Naive thymus-derived CD4-positive, alpha-beta T cell (primary cell): ENCODE measurements at regions of chr4 and their contacts with region 1.

Region 1: GRCh38 chr4:143184217-143185116 is at the start of gene USP38:
- DNase-seq: peak; percentile 74 to 90 (median 85)
- ATAC-seq: peak; percentile 91
- H3K4me3 ChIP-seq: peak within 1 kb of the TSS; percentile 78
- H3K4me3 Mint-ChIP-seq: peak within 1 kb of the TSS; percentile 78 to 99 (median 94)
- H3K27ac ChIP-seq: peak within 1 kb of the TSS; percentile 96
- H3K27ac Mint-ChIP-seq: peak within 1 kb of the TSS; percentile 93 to 99 (median 97)
- H3K4me1 ChIP-seq: peaks cover 27% of the 10 kb centered on the region in 2 donors
- H3K4me1 Mint-ChIP-seq: peaks cover 41 to 82% (median 70%) of the 10 kb centered on the region in 7 donors
- H3K27me3 ChIP-seq: no peaks in the 10 kb centered on the region
- H3K27me3 Mint-ChIP-seq: no peaks in the 10 kb centered on the region
- total RNA-seq, gene USP38: 22.4 to 28.8 (median 24.3) TPM

Region 2: GRCh38 chr4:141220655-141221605 is 1963.5 kb before region 1 on chr4 and contains the start of gene ZNF330:
- CTCF ChIA-PET with region 1: no interaction called
- POLR2A ChIA-PET with region 1: no interaction called
- intact Hi-C with region 1: loop called (anchors 1 to 2 kb)
- DNase-seq: peak; percentile 80 to 97 (median 90)
- ATAC-seq: peak; percentile 97
- H3K4me3 ChIP-seq: peak within 1 kb of the TSS; percentile 94
- H3K4me3 Mint-ChIP-seq: peak within 1 kb of the TSS; percentile 91 to 99 (median 94)
- H3K27ac ChIP-seq: peak within 1 kb of the TSS; percentile 93
- H3K27ac Mint-ChIP-seq: peak within 1 kb of the TSS; percentile 91 to 97 (median 96)
- H3K4me1 ChIP-seq: peaks cover 9 to 13% of the 10 kb centered on the region in 2 donors
- H3K4me1 Mint-ChIP-seq: peaks cover 24 to 58% (median 52%) of the 10 kb centered on the region in 7 donors
- H3K27me3 ChIP-seq: no peaks in the 10 kb centered on the region
- H3K27me3 Mint-ChIP-seq: peaks cover 0 to 18% (median 6%) of the 10 kb centered on the region in 5 donors
- total RNA-seq, gene ZNF330: 31.7 to 44.7 (median 41.0) TPM

Region 3: GRCh38 chr4:142126890-142127497 is 1057.5 kb before region 1 on chr4:
- CTCF ChIA-PET with region 1: no interaction called
- POLR2A ChIA-PET with region 1: no interaction called
- intact Hi-C with region 1: loop called (anchors 1 to 5 kb)
- DNase-seq: peak in 8 of 9 donors; percentile 30 to 73 (median 66)
- ATAC-seq: peak; percentile 83
- H3K4me3 ChIP-seq: no peak overlapping the region
- H3K4me3 Mint-ChIP-seq: no peak overlapping the region
- H3K27ac ChIP-seq: no peak overlapping the region
- H3K27ac Mint-ChIP-seq: peak overlapping the region in 1 of 9 donors; percentile 22
- H3K4me1 ChIP-seq: peaks cover 0 to 32% of the 10 kb centered on the region in 2 donors
- H3K4me1 Mint-ChIP-seq: peaks cover 10 to 38% (median 37%) of the 10 kb centered on the region in 7 donors
- H3K27me3 ChIP-seq: no peaks in the 10 kb centered on the region
- H3K27me3 Mint-ChIP-seq: no peaks in the 10 kb centered on the region

Region 4: DNA sequence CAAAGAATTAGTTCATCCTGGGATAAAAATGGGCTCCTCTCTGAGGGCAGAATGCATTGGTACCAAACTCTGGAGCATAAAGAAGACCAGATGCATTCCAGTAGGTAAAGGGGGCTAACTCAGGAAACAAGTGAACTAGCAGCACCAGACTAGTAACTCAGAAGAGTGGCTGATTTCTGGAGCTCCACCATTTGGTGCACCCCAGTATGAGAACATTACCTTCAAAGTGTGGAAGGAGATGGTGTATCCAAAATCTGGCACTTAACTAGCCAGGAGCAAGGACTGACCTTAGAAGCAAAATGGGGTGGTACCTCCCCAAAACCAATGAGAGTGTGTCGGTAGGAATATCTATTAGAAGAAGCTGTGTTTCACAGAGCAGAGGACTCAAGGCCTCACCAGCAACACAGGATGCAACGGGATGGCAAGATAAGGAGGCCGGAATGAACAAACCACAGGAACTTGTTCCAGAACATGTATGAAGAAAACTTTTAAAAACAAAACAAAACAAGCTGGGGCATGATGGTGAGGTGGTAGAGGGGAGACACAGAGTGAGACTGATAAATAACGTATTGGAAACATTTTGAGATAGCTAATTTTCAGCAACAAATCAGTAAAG is 480.7 kb before region 1 on chr4:
- CTCF ChIA-PET with region 1: no interaction called
- POLR2A ChIA-PET with region 1: no interaction called
- intact Hi-C with region 1: loop called in 1 of 2 experiments (anchors 10 kb)
- DNase-seq: peak in 7 of 9 donors; percentile 51 to 71 (median 58)
- ATAC-seq: peak; percentile 76
- H3K4me3 ChIP-seq: peak overlapping the region; percentile 14
- H3K4me3 Mint-ChIP-seq: no peak overlapping the region
- H3K27ac ChIP-seq: peak overlapping the region; percentile 54
- H3K27ac Mint-ChIP-seq: no peak overlapping the region
- H3K4me1 ChIP-seq: peaks cover 51 to 94% of the 10 kb centered on the region in 2 donors
- H3K4me1 Mint-ChIP-seq: peaks cover 20 to 35% (median 32%) of the 10 kb centered on the region in 7 donors
- H3K27me3 ChIP-seq: no peaks in the 10 kb centered on the region
- H3K27me3 Mint-ChIP-seq: no peaks in the 10 kb centered on the region

Region 5: DNA sequence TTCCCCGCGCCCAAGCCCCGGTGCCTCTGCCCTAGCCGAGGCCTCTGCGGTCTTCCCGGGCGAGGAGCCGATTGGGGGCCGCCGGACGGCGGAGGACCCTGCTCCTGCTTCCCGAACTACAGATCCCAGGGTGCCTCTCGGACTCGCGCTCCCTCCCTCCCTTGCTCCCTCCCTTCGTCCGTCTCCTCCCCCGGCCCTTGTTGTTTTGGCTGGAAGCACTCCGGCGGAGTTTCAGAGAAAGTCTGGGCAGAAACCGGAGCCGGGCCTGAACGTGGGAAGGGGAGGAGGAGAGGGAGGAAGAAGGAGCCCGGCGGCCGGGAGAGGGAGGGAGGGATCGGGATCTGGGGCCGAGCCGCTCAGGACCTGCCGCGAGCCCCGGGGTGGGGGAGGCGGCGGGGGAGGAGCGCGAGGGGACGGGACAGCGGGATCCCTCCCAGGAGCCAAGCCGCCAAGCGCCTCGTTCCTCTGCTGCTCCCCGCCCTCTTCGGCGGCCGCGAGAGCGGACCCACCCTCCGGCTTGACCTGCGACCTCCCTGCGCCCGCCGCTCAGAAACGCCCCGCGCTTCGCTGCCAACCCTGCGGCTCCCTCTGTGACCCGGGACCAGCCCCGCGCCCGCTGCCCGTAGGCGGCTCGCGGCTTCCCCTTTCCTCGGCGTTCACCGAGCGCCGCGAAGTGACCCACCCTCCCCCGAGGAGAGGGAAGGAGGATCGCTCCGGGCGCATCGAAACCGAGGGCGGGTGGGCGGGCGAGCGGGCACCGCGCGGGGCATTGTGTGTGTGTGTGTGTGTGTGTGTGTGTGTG is 151.7 kb after region 1 on chr4:
- CTCF ChIA-PET with region 1: no interaction called
- POLR2A ChIA-PET with region 1: no interaction called
- intact Hi-C with region 1: loop called in 1 of 2 experiments (anchors 5 kb)
- DNase-seq: peak in 2 of 9 donors; percentile 25 to 56
- ATAC-seq: peak; percentile 68
- H3K4me3 ChIP-seq: peak overlapping the region; percentile 13
- H3K4me3 Mint-ChIP-seq: peak overlapping the region; percentile 45 to 91 (median 74)
- H3K27ac ChIP-seq: no peak overlapping the region
- H3K27ac Mint-ChIP-seq: no peak overlapping the region
- H3K4me1 ChIP-seq: no peaks in the 10 kb centered on the region
- H3K4me1 Mint-ChIP-seq: peaks cover 4 to 12% (median 5%) of the 10 kb centered on the region in 7 donors
- H3K27me3 ChIP-seq: peaks cover 3 to 19% of the 10 kb centered on the region in 2 donors
- H3K27me3 Mint-ChIP-seq: peaks cover 39 to 65% (median 49%) of the 10 kb centered on the region in 5 donors

Region 6: GRCh38 chr4:143406523-143406922 is 222.1 kb after region 1 on chr4:
- CTCF ChIA-PET with region 1: no interaction called
- POLR2A ChIA-PET with region 1: no interaction called
- intact Hi-C with region 1: loop called in 1 of 2 experiments (anchors 10 kb)
- DNase-seq: no peak
- ATAC-seq: no peak
- H3K4me3 ChIP-seq: no peak overlapping the region
- H3K4me3 Mint-ChIP-seq: no peak overlapping the region
- H3K27ac ChIP-seq: no peak overlapping the region
- H3K27ac Mint-ChIP-seq: no peak overlapping the region
- H3K4me1 ChIP-seq: peaks cover 0 to 5% of the 10 kb centered on the region in 2 donors
- H3K4me1 Mint-ChIP-seq: peaks cover 10 to 25% (median 18%) of the 10 kb centered on the region in 7 donors
- H3K27me3 ChIP-seq: no peaks in the 10 kb centered on the region
- H3K27me3 Mint-ChIP-seq: peaks cover 6 to 22% (median 14%) of the 10 kb centered on the region in 5 donors

Region 7: GRCh38 chr4:145097821-145098674 is 1913.6 kb after region 1 on chr4 and contains the starts of genes ABCE1 and ANAPC10:
- CTCF ChIA-PET with region 1: no interaction called
- POLR2A ChIA-PET with region 1: no interaction called
- intact Hi-C with region 1: loop called (anchors 1 to 10 kb)
- DNase-seq: peak; percentile 88 to 98 (median 94)
- ATAC-seq: peak; percentile 96
- H3K4me3 ChIP-seq: peak within 1 kb of the TSS; percentile 94
- H3K4me3 Mint-ChIP-seq: peak within 1 kb of the TSS in 9 of 10 donors; percentile 93 to 98 (median 96)
- H3K27ac ChIP-seq: peak within 1 kb of the TSS; percentile 80
- H3K27ac Mint-ChIP-seq: peak within 1 kb of the TSS; percentile 95 to 99 (median 98)
- H3K4me1 ChIP-seq: peaks cover 22 to 23% of the 10 kb centered on the region in 2 donors
- H3K4me1 Mint-ChIP-seq: peaks cover 28 to 52% (median 33%) of the 10 kb centered on the region in 7 donors
- H3K27me3 ChIP-seq: no peaks in the 10 kb centered on the region
- H3K27me3 Mint-ChIP-seq: no peaks in the 10 kb centered on the region
- total RNA-seq, gene ABCE1: 43.4 to 81.3 (median 62.2) TPM
- total RNA-seq, gene ANAPC10: 13.2 to 28.0 (median 19.6) TPM